ENCODE measurements at regions of chr16 and their contacts with region 1.

Region 1: DNA sequence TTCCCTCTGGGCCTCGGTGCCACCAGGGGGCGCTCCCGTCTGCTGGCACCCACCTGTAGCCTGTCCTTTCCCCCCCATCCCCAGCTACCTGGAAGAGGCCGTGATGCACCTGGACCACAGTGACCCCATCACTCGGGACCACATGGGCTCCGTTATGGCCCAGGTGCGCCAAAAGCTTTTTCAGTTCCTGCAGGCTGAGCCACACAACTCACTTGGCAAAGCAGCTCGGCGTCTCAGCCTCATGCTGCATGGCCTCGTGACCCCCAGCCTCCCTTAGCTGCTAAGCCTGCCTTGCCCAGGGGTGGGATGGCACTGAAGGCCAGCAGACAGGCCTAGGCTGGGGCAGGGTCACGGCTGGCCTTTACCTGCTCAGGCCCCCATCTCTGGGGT is 818 bp upstream of the NRN1L start:
- DNase-seq: peak; percentile 74
- ATAC-seq: peak; percentile 78

Region 2: GRCh38 chr16:67833418-67834241 is 50.2 kb before region 1 on chr16:
- intact Hi-C with region 1: no loop called
- DNase-seq: peak; percentile 98
- ATAC-seq: peak; percentile 99

Region 3: DNA sequence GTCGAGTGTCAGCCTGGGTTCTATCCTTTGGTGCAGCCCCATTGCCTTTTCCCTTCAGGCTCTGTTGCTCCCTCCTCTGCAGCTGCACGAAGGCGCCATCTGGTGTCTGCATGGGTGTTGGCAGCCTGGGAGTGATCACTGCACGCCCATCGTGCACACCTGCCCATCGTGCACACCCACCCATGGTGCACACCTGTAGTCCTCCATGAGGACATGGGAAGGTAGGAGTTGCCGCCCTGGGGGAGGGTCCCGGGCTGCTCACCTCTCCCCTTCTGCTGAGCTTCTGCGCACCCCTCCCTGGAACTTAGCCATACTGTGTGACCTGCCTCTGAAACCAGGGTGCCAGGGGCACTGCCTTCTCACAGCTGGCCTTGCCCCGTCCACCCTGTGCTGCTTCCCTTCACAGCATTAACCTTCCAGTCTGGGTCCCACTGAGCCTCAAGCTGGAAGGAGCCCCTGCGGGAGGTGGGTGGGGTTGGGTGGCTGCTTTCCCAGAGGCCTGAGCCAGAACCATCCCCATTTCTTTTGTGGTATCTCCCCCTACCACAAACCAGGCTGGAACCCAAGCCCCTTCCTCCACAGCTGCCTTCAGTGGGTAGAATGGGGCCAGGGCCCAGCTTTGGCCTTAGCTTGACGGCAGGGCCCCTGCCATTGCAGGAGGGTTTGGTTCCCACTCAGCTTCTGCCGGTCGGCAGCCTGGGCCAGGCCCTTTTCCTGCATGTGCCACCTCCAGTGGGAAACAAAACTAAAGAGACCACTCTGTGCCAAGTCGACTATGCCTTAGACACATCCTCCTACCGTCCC is 44.9 kb after region 1 on chr16:
- intact Hi-C with region 1: loop called (anchors 5 kb)
- DNase-seq: peak; percentile 85
- ATAC-seq: peak; percentile 75

Region 4: GRCh38 chr16:67967183-67967957 is 83.5 kb after region 1 on chr16:
- intact Hi-C with region 1: no loop called
- DNase-seq: no peak
- ATAC-seq: no peak